ENCODE measurements at regions of chr10 and their contacts with region 1.

Region 1: GRCh38 chr10:101214446-101215396 is 14.5 kb downstream of the LBX1 start:
- DNase-seq: peak; percentile 84
- ATAC-seq: peak; percentile 79
- H3K4me3 Mint-ChIP-seq: peak overlapping the region; percentile 42
- H3K27ac Mint-ChIP-seq: no peak overlapping the region
- H3K4me1 Mint-ChIP-seq: peaks cover 27% of the 10 kb centered on the region
- H3K27me3 Mint-ChIP-seq: peaks cover 75% of the 10 kb centered on the region
- CTCF ChIP-seq: peak; percentile 95

Region 2: GRCh38 chr10:101161494-101162299 is 53.0 kb before region 1 on chr10:
- CTCF ChIA-PET with region 1: interaction called, 19 read pairs
- POLR2A ChIA-PET with region 1: interaction called, 4 read pairs
- intact Hi-C with region 1: no loop called
- DNase-seq: peak; percentile 77
- ATAC-seq: peak; percentile 96
- H3K4me3 Mint-ChIP-seq: no peak overlapping the region
- H3K27ac Mint-ChIP-seq: no peak overlapping the region
- H3K4me1 Mint-ChIP-seq: peaks cover 5% of the 10 kb centered on the region
- H3K27me3 Mint-ChIP-seq: peaks cover 52% of the 10 kb centered on the region
- CTCF ChIP-seq: peak; percentile 95

Region 3: DNA sequence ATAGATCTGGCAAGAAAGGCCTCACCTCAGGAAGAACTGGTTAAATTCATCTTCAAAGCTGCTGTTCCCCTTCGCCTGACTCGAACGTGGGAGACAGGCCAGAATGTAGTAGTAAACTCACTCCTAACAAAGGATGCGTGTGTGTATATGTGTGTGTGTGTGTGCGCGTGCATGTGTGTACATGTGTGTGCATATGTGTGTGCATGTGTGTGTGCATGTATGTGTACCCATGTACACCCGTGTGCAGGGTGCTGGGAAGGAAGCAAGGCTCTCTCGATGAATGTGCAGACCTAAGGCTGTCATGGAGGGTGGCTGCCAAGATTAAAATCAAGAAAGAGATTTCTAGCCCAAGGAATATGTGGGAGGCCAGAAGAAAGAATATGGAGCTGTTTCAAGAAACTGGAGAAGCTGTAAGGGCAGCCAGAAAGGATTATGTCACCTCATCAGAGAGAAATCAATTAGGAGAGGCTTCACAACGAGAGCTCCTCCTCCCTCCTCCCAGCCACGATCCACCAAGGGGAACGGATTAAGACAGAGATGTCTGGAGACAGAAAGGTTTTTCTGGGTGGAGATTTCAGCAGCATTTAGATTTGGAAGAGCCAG is 48.5 kb after region 1 on chr10:
- CTCF ChIA-PET with region 1: interaction called, 13 read pairs
- POLR2A ChIA-PET with region 1: no interaction called
- intact Hi-C with region 1: no loop called
- DNase-seq: no peak
- ATAC-seq: no peak
- H3K4me3 Mint-ChIP-seq: no peak overlapping the region
- H3K27ac Mint-ChIP-seq: no peak overlapping the region
- H3K4me1 Mint-ChIP-seq: no peaks in the 10 kb centered on the region
- H3K27me3 Mint-ChIP-seq: peaks cover 23% of the 10 kb centered on the region
- CTCF ChIP-seq: no peak

Region 4: GRCh38 chr10:101297901-101298486 is 83.3 kb after region 1 on chr10:
- CTCF ChIA-PET with region 1: interaction called, 174 read pairs
- POLR2A ChIA-PET with region 1: no interaction called
- intact Hi-C with region 1: no loop called
- DNase-seq: peak; percentile 88
- ATAC-seq: peak; percentile 91
- H3K4me3 Mint-ChIP-seq: no peak overlapping the region
- H3K27ac Mint-ChIP-seq: no peak overlapping the region
- H3K4me1 Mint-ChIP-seq: no peaks in the 10 kb centered on the region
- H3K27me3 Mint-ChIP-seq: peaks cover 37% of the 10 kb centered on the region
- CTCF ChIP-seq: peak; percentile 94

Region 5: DNA sequence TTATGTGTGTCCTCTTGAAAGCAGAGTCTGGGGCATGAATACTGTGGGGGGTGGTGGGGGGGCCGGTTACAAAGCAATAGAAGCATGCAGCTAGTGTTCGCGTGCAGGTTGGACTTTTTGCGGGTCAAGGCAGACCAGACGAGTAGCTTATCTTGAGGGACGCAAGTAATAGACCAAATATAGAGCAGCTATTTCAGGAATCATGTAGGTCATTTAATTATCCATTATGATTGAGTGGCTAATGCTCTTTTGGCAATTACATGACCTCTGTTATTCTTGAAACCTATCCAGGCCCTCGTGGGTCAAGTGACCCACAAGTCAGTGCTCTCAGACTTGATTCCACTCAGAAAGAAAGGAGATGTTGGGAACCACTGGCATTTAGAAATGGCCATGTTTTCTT is 232.2 kb after region 1 on chr10:
- CTCF ChIA-PET with region 1: interaction called, 74 read pairs
- POLR2A ChIA-PET with region 1: no interaction called
- intact Hi-C with region 1: no loop called
- DNase-seq: no peak
- ATAC-seq: no peak
- H3K4me3 Mint-ChIP-seq: no peak overlapping the region
- H3K27ac Mint-ChIP-seq: no peak overlapping the region
- H3K4me1 Mint-ChIP-seq: peaks cover 15% of the 10 kb centered on the region
- H3K27me3 Mint-ChIP-seq: no peaks in the 10 kb centered on the region
- CTCF ChIP-seq: no peak

Region 6: DNA sequence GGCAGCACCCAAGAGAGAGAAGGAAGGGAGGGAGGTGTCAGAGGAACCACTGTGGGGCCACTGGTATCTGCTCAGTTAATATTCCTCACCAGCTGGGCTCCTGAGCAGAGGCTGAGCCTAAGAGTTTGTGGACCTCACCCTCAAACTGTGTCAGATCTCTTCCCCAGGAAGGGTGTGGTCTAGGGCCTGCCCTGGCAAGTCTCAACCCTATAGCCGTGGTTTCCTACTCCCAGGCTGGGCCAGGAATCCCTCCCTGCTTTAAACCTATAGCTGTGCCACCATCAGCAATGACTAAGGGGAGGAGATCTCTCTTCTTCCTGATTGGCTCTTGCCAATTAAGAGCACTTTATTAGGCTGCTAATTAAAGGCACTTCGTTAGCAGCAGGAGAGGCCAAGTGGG is 343.5 kb after region 1 on chr10:
- CTCF ChIA-PET with region 1: interaction called, 11 read pairs
- POLR2A ChIA-PET with region 1: no interaction called
- intact Hi-C with region 1: no loop called
- DNase-seq: no peak
- ATAC-seq: peak; percentile 50
- H3K4me3 Mint-ChIP-seq: no peak overlapping the region
- H3K27ac Mint-ChIP-seq: no peak overlapping the region
- H3K4me1 Mint-ChIP-seq: peaks cover 9% of the 10 kb centered on the region
- H3K27me3 Mint-ChIP-seq: peaks cover 4% of the 10 kb centered on the region
- CTCF ChIP-seq: no peak

Measured in activated CD8-positive, alpha-beta T cell treated with anti-CD3 and anti-CD28 coated beads for 36 hours (primary cell).